ENCODE measurements at regions of chr3 and their contacts with region 1.

Region 1: DNA sequence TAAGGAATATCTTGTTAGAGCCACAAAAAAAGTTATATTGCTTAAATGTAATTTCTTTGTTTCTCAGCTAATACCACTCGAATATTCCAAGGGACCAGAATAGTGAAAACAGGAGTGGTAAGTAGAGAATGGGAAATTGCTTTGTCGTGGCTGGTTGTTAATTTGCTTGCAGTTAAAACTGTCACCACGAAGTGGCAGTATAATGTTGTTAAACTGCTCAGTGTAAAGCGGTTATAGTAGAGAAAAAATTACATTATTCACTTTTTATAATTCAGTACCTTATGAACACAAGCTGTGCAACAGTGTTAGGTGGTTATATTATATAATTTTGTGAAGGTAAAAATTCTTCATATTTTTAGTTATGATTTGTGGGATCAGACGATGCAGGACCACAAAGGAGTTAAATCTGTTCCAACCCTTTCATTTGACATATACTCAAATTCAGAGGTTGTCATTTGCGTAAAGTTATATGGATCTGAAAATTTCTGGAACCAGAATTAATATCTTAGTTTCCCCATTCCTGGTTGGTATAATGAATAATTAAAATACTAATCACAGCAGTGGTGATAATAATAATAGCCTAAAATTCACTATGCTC is 171.8 kb downstream of the FEZF2 start:
- DNase-seq: no peak
- ATAC-seq: peak; percentile 79
- H3K4me3 ChIP-seq: no peak overlapping the region
- H3K27ac ChIP-seq: no peak overlapping the region
- H3K4me1 ChIP-seq: no peaks in the 10 kb centered on the region
- H3K27me3 ChIP-seq: no peaks in the 10 kb centered on the region
- CTCF ChIP-seq: peak; percentile 38 to 68 (median 51); a peak in 5 of 6 replicates
- EP300 ChIP-seq: no peak
- POLR2A ChIP-seq: no peak
- RAD21 ChIP-seq: peak; percentile 45

Region 2: DNA sequence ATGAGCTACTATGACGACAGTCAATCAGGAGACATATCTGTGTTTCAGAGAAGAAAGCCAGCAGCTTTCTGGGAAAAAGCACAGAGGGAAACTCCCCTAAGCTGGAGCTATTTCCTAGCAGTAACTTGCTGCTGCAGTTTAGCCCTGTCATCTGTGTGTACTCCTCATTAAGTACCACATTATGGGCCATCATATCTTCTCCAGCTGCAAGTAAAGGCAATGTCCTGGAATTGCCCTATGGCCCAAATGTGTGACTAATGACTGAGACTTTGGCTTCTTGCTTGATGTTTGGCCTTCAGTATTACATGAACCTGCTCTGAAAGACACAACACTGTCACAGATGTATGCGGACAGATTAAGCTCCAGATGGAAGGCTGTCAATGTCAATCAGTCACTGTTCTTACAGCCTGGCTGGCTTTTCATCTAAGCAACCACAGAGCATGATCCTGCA is 1141.1 kb before region 1 on chr3:
- CTCF ChIA-PET with region 1: no interaction called
- POLR2A ChIA-PET with region 1: no interaction called
- RAD21 ChIA-PET with region 1: no interaction called
- SMC1A ChIA-PET with region 1: no interaction called
- in situ Hi-C with region 1: no loop called
- intact Hi-C with region 1: no loop called
- DNase-seq: no peak
- ATAC-seq: no peak
- H3K4me3 ChIP-seq: no peak overlapping the region
- H3K27ac ChIP-seq: no peak overlapping the region
- H3K4me1 ChIP-seq: no peaks in the 10 kb centered on the region
- H3K27me3 ChIP-seq: no peaks in the 10 kb centered on the region
- CTCF ChIP-seq: no peak
- EP300 ChIP-seq: no peak
- POLR2A ChIP-seq: no peak
- RAD21 ChIP-seq: no peak

Region 3: DNA sequence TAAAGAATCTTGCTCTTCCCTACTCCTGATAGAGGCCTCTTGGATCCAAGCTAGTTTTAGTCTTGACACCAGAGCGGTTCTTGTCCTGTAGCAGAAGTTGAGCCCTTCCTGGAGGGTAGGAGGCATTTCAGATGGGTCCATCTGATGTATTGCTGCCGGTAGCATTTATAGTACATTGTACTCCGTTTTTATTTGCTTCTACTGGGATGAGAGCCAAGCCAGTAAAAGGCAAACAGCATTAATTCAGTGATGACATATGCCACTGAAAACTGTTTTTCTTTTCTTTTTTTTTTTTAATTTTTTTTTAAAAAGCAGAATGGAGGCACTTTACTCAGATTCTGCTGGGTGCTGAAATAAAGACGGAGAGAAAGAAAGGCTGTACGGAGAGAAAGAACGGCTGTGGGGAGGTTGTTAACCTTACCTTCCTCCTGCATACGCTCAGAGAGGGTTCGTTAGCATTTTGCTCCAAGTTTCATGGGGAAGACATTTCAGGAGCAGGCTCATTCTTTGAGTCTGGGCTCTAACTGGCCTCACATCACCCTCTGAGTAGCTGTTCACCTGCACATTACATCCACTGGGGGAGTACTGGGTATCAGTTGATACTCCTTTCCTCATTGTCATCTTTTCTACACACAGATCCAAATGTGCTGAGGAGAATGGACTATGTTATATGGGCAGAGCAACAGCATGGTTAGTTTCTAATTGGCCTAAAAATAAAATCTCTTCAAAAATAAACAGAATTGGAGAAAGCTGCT is 10.3 kb after region 1 on chr3:
- CTCF ChIA-PET with region 1: interaction called, 15 read pairs
- POLR2A ChIA-PET with region 1: interaction called, 3 read pairs
- RAD21 ChIA-PET with region 1: interaction called, 3 read pairs
- SMC1A ChIA-PET with region 1: interaction called, 6 read pairs
- in situ Hi-C with region 1: no loop called
- intact Hi-C with region 1: no loop called
- DNase-seq: no peak
- ATAC-seq: no peak
- H3K4me3 ChIP-seq: no peak overlapping the region
- H3K27ac ChIP-seq: no peak overlapping the region
- H3K4me1 ChIP-seq: no peaks in the 10 kb centered on the region
- H3K27me3 ChIP-seq: no peaks in the 10 kb centered on the region
- CTCF ChIP-seq: no peak
- EP300 ChIP-seq: no peak
- POLR2A ChIP-seq: no peak
- RAD21 ChIP-seq: no peak

Region 4: DNA sequence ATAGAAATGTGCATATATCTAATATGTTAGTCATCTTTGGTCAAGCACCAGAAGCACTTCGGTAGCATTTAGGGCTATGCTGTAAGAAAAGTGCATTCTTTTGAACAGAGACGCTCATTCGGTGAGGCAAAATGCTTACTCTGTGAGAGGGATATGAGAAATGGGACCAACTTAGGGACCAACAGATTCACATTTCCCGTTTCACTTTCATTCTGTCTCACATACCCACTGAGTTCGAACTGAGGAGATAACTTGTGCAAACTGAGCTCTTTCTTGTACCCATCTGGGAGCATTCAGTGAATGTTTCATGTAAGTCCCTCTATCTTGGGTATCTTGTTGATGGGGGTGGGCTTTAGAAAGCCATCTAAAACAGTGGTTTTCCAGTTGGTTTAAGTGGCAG is 36.5 kb after region 1 on chr3:
- CTCF ChIA-PET with region 1: interaction called, 41 read pairs
- POLR2A ChIA-PET with region 1: no interaction called
- RAD21 ChIA-PET with region 1: interaction called, 4 read pairs
- SMC1A ChIA-PET with region 1: interaction called, 25 read pairs
- in situ Hi-C with region 1: no loop called
- intact Hi-C with region 1: no loop called
- DNase-seq: peak; percentile 15
- ATAC-seq: peak; percentile 92
- H3K4me3 ChIP-seq: no peak overlapping the region
- H3K27ac ChIP-seq: no peak overlapping the region
- H3K4me1 ChIP-seq: no peaks in the 10 kb centered on the region
- H3K27me3 ChIP-seq: no peaks in the 10 kb centered on the region
- CTCF ChIP-seq: no peak
- EP300 ChIP-seq: peak in 1 of 2 experiments; percentile 57; a peak in 1 of 4 replicates
- POLR2A ChIP-seq: no peak
- RAD21 ChIP-seq: no peak

Region 5: GRCh38 chr3:62261121-62261520 is 59.6 kb after region 1 on chr3:
- CTCF ChIA-PET with region 1: interaction called, 28 read pairs
- POLR2A ChIA-PET with region 1: interaction called, 3 read pairs
- RAD21 ChIA-PET with region 1: interaction called, 4 read pairs
- SMC1A ChIA-PET with region 1: interaction called, 6 read pairs
- in situ Hi-C with region 1: no loop called
- intact Hi-C with region 1: no loop called
- DNase-seq: no peak
- ATAC-seq: peak; percentile 83
- H3K4me3 ChIP-seq: no peak overlapping the region
- H3K27ac ChIP-seq: no peak overlapping the region
- H3K4me1 ChIP-seq: no peaks in the 10 kb centered on the region
- H3K27me3 ChIP-seq: no peaks in the 10 kb centered on the region
- CTCF ChIP-seq: no peak
- EP300 ChIP-seq: no peak
- POLR2A ChIP-seq: no peak
- RAD21 ChIP-seq: no peak

Region 6: DNA sequence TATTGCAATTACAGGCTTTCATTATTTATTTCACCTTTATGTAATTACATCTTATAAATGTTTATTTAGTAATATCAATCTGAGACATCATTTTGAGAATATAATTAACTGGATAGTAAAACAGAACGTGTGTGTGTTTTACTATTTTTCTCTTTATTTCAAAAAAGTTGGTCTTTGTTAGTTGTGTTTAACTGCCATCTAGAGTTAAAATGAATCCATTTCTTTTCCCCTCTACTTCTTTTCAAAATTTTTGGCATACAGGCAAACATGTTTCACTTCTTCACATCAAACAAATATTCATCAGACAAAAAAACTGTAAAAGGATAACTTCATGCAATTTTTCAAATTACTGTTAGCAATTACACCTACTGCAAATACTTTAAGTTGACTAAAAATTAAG is 110.7 kb after region 1 on chr3:
- CTCF ChIA-PET with region 1: interaction called, 35 read pairs
- POLR2A ChIA-PET with region 1: no interaction called
- RAD21 ChIA-PET with region 1: interaction called, 21 read pairs
- SMC1A ChIA-PET with region 1: interaction called, 27 read pairs
- in situ Hi-C with region 1: no loop called
- intact Hi-C with region 1: loop called (anchors 5 kb)
- DNase-seq: no peak
- ATAC-seq: no peak
- H3K4me3 ChIP-seq: no peak overlapping the region
- H3K27ac ChIP-seq: no peak overlapping the region
- H3K4me1 ChIP-seq: no peaks in the 10 kb centered on the region
- H3K27me3 ChIP-seq: no peaks in the 10 kb centered on the region
- CTCF ChIP-seq: no peak; a peak in 1 of 6 replicates
- EP300 ChIP-seq: no peak
- POLR2A ChIP-seq: no peak
- RAD21 ChIP-seq: no peak

Region 7: DNA sequence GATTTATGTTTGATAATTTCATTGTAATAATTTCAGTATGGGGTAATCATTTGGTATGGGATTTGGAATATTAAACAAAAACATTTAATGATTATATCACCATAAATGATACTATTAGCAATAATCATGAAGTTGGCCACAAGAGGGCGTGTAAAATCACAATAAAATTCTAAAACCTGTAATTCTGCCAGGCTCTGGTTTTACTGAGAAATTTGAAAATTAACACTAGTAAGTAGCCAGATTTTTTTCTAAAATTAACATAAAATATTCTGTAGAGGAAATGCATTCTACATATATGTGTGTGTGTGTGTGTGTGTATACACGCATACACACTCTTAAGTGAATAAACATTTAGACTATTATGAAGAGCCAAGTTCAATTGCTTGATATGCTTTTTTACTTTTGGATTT is 131.3 kb after region 1 on chr3:
- CTCF ChIA-PET with region 1: interaction called, 52 read pairs
- POLR2A ChIA-PET with region 1: no interaction called
- RAD21 ChIA-PET with region 1: interaction called, 5 read pairs
- SMC1A ChIA-PET with region 1: interaction called, 20 read pairs
- in situ Hi-C with region 1: no loop called
- intact Hi-C with region 1: loop called (anchors 5 kb)
- DNase-seq: no peak
- ATAC-seq: 0 out of 3 replicates have a peak, but pooled peaks have one; percentile 40
- H3K4me3 ChIP-seq: no peak overlapping the region
- H3K27ac ChIP-seq: no peak overlapping the region
- H3K4me1 ChIP-seq: no peaks in the 10 kb centered on the region
- H3K27me3 ChIP-seq: no peaks in the 10 kb centered on the region
- CTCF ChIP-seq: peak; percentile 37 to 51 (median 47); a peak in 5 of 6 replicates
- EP300 ChIP-seq: no peak
- POLR2A ChIP-seq: no peak
- RAD21 ChIP-seq: 0 out of 2 replicates have a peak, but pooled peaks have one; percentile 18

Region 8: DNA sequence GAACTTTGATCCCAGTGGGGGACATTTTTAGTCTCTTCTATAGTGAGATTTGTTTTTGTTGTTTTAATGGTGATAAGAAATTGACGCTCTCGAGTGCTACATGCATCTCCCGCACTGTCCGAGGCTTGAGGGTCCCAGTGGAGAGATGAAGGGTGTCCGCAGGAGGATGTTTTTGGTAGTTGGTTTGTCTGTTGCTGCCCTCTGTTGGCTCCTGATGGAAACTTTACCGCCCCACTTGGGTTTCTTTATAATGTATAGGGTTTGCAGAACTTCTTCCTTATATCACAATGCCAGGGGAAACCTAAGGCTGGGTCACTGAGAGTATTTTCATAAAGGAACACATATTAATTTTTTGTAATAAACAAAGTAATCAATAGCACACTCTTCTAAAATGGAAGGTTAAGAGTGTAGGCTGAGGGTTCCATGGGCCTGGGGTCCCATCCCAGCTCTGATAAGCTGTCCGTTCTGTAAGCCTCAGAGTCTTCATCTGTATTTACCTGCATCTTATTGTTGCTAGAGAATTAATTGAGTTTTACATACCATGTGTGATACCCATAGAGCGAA is 357.1 kb after region 1 on chr3:
- CTCF ChIA-PET with region 1: interaction called, 40 read pairs
- POLR2A ChIA-PET with region 1: no interaction called
- RAD21 ChIA-PET with region 1: interaction called, 3 read pairs
- SMC1A ChIA-PET with region 1: interaction called, 7 read pairs
- in situ Hi-C with region 1: loop called (anchors 5 kb)
- intact Hi-C with region 1: loop called (anchors 1 kb)
- DNase-seq: no peak
- ATAC-seq: peak; percentile 82
- H3K4me3 ChIP-seq: no peak overlapping the region
- H3K27ac ChIP-seq: no peak overlapping the region
- H3K4me1 ChIP-seq: no peaks in the 10 kb centered on the region
- H3K27me3 ChIP-seq: no peaks in the 10 kb centered on the region
- CTCF ChIP-seq: peak; percentile 35 to 46 (median 36); a peak in 5 of 6 replicates
- EP300 ChIP-seq: no peak
- POLR2A ChIP-seq: no peak
- RAD21 ChIP-seq: peak; percentile 41; the same call in 1 of the 2 replicates

Measured in GM12878 (cell line).